ENCODE measurements at regions of chr13 and their contacts with region 1.

Region 1: DNA sequence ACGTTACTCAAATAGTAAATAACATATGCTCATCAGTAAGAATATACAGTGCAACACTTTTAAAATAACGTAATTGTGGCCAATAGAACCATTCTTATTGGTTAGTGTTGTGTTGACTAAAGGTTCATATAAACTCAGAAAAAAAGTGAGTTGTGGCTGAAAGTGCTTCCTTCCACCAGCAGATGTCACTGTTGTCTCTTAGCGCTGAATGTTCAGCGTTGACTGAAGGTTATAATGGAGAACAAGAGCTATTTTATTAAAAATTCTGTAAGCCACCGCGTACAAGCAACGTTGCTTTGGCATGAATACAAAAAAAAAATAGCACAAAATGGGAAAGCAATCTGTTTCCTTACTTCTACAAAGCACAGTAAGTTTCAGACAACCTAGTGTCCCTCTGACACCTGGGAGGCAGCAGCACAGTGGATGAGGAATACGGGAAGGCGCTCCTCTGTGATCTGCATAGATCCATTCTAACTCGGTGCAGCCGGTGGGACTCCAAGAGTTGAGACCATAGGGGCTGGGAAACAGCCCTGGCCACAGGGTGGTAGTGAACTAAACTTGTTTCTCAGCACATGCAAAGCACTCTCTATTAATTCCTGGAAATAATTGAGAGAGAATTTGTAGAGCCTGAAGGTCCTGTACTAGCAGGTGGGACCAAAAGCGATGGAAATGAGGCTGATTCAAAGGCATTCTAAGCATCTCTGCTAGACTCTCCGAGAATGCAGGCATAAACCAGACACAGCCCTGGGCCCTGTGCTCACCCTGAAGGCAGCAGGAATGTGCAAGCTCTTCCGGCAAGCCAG is 24.0 kb upstream of the OXGR1 start:
- DNase-seq: peak; percentile 39
- H3K4me3 ChIP-seq: no peak overlapping the region
- H3K27ac ChIP-seq: no peak overlapping the region
- H3K4me1 ChIP-seq: no peaks in the 10 kb centered on the region
- H3K27me3 ChIP-seq: peaks cover 3% of the 10 kb centered on the region
- CTCF ChIP-seq: peak; percentile 89 to 96

Region 2: GRCh38 chr13:97588993-97589392 is 570.8 kb after region 1 on chr13:
- CTCF ChIA-PET with region 1: no interaction called
- dilution Hi-C with region 1: no loop called
- in situ Hi-C with region 1: no loop called
- intact Hi-C with region 1: loop called (anchors 10 kb)
- DNase-seq: no peak
- H3K4me3 ChIP-seq: no peak overlapping the region
- H3K27ac ChIP-seq: no peak overlapping the region
- H3K4me1 ChIP-seq: no peaks in the 10 kb centered on the region
- H3K27me3 ChIP-seq: no peaks in the 10 kb centered on the region
- CTCF ChIP-seq: no peak

Measured in mammary epithelial cell (primary cell).